Panc1 (cell line): ENCODE measurements at regions of chr7 and their contacts with region 1.

Region 1: GRCh38 chr7:111486472-111487142 is 75.7 kb downstream of the IMMP2L start:
- DNase-seq: peak; percentile 55
- ATAC-seq: no peak
- H3K4me3 ChIP-seq: no peak overlapping the region
- H3K27ac ChIP-seq: no peak overlapping the region
- H3K4me1 ChIP-seq: no peaks in the 10 kb centered on the region
- H3K27me3 ChIP-seq: no peaks in the 10 kb centered on the region
- CTCF ChIP-seq: peak; percentile 70; the same call in 1 of the 2 replicates

Region 2: GRCh38 chr7:111089822-111090426 is 396.7 kb before region 1 on chr7:
- CTCF ChIA-PET with region 1: no interaction called
- POLR2A ChIA-PET with region 1: no interaction called
- in situ Hi-C with region 1: no loop called
- intact Hi-C with region 1: loop called (anchors 2 kb)
- DNase-seq: no peak
- ATAC-seq: no peak
- H3K4me3 ChIP-seq: no peak overlapping the region
- H3K27ac ChIP-seq: no peak overlapping the region
- H3K4me1 ChIP-seq: no peaks in the 10 kb centered on the region
- H3K27me3 ChIP-seq: no peaks in the 10 kb centered on the region
- CTCF ChIP-seq: peak; percentile 76; the same call in 1 of the 2 replicates

Region 3: GRCh38 chr7:111329367-111330234 is 157.0 kb before region 1 on chr7:
- CTCF ChIA-PET with region 1: no interaction called
- POLR2A ChIA-PET with region 1: no interaction called
- in situ Hi-C with region 1: no loop called
- intact Hi-C with region 1: loop called (anchors 10 kb)
- DNase-seq: no peak
- ATAC-seq: no peak
- H3K4me3 ChIP-seq: no peak overlapping the region
- H3K27ac ChIP-seq: no peak overlapping the region
- H3K4me1 ChIP-seq: no peaks in the 10 kb centered on the region
- H3K27me3 ChIP-seq: no peaks in the 10 kb centered on the region
- CTCF ChIP-seq: peak; percentile 12; the same call in 1 of the 2 replicates

Region 4: DNA sequence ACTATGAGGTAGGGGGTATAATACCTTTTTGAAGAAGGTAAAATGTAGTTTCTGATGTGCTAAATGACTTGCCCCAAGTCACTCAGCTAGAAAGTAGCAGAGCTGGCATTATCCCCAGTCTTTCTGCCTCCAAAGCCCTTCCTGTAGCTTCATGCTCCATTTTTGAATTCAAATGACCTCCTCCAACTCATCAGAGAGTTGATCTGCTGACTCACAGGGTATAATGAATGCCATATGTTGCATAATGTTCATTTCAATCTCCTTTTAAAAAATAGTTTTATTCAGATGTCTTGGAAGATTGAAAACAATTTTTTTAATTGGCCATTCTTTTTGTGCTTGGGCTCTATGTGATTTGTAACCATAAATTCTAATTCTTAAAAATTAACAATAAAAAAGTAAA is 348.5 kb after region 1 on chr7:
- CTCF ChIA-PET with region 1: no interaction called
- POLR2A ChIA-PET with region 1: no interaction called
- in situ Hi-C with region 1: no loop called
- intact Hi-C with region 1: no loop called
- DNase-seq: no peak
- ATAC-seq: no peak
- H3K4me3 ChIP-seq: no peak overlapping the region
- H3K27ac ChIP-seq: no peak overlapping the region
- H3K4me1 ChIP-seq: no peaks in the 10 kb centered on the region
- H3K27me3 ChIP-seq: no peaks in the 10 kb centered on the region
- CTCF ChIP-seq: no peak